ENCODE measurements at regions of chr2 and their contacts with region 1.

Region 1: DNA sequence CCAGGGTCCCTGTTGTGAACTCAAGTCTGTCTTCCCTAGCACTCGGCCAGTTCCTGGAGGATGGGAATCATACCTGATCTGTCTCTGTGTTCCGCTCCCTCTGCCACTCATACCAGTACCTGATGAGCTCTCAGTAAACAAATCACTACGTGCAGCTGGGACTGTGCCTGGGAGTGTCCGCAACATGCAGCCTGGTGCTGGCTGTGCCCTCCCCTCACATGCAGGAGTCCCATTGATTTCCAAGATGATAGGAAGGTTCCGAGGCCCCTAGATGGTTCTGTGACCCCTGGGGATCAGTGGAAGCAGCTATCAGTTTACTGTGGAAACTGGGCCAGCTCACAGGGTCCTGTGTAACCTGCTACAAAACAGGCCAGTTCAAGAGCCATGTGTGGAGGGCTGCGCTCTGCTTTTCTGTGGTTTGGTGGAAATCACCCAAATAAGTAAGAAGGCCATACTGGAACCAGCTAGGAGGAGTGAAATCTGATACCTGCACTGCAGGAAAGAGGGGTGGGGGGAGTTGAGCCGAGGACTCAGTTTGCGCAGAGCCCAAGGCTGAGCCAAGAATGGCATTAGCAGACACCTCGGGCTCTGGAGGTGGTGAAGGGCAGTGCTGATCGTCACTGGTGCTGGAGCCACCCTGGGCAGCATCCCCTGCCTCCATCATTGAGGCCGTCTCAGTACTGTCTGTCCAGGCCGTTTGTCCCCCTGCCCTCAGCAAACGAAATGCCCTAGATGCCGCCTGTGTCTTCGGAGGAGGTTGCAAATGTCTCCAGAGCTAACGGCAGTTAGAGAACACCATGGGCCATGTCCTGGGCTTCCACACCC is 93.3 kb downstream of the KLHL29 start:
- DNase-seq: no peak
- H3K4me3 ChIP-seq: no peak overlapping the region
- H3K27me3 ChIP-seq: no peaks in the 10 kb centered on the region
- CTCF ChIP-seq: no peak

Region 2: GRCh38 chr2:23399674-23400261 is 78.5 kb before region 1 on chr2:
- CTCF ChIA-PET with region 1: no interaction called
- POLR2A ChIA-PET with region 1: interaction called, 12 read pairs
- DNase-seq: no peak
- H3K4me3 ChIP-seq: no peak overlapping the region
- H3K27me3 ChIP-seq: no peaks in the 10 kb centered on the region
- CTCF ChIP-seq: no peak

Measured in BJ (cell line).